GM23248 (cell line): ENCODE measurements at regions of chr4 and their contacts with region 1.

Region 1: GRCh38 chr4:47933840-47934239 is 19.5 kb upstream of the NFXL1 start:
- DNase-seq: peak; percentile 69
- H3K4me3 ChIP-seq: no peak overlapping the region
- H3K27ac ChIP-seq: no peak overlapping the region
- H3K4me1 ChIP-seq: peaks cover 9% of the 10 kb centered on the region
- H3K27me3 ChIP-seq: 0 out of 2 replicates have a peak, but pooled peaks cover 3% of the 10 kb centered on the region

Region 2: DNA sequence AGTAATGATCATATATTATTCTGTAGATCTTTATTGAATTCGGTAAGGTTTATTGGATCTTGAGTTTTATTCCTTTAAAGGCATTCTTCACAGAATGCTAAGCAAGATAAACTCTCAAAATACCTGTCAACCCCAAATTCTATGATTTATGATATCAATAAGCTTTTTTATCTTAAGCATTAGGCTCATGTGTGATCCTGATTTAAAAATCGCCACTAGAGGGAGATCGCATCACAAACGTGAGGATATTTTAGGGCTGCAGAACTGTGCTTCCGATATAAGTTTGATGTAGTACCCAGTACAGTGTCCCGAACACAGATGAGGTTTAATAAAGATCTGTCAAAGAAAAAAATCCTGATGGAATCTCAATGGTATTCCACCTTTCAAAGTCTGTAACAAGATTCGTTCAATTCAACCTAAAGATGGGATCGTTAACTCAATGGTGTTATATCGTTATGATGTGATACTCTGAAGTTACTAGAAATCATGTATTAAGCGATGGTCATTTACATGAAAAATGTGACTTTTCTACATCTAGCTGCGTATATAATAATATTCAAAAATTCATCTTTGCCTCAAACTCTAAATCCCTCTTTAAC is 264.9 kb before region 1 on chr4:
- in situ Hi-C with region 1: loop called (anchors 10 kb)
- DNase-seq: peak; percentile 66
- H3K4me3 ChIP-seq: no peak overlapping the region
- H3K27ac ChIP-seq: no peak overlapping the region
- H3K4me1 ChIP-seq: no peaks in the 10 kb centered on the region
- H3K27me3 ChIP-seq: peaks cover 11% of the 10 kb centered on the region